ENCODE measurements at regions of chr6 and their contacts with region 1.

Region 1: DNA sequence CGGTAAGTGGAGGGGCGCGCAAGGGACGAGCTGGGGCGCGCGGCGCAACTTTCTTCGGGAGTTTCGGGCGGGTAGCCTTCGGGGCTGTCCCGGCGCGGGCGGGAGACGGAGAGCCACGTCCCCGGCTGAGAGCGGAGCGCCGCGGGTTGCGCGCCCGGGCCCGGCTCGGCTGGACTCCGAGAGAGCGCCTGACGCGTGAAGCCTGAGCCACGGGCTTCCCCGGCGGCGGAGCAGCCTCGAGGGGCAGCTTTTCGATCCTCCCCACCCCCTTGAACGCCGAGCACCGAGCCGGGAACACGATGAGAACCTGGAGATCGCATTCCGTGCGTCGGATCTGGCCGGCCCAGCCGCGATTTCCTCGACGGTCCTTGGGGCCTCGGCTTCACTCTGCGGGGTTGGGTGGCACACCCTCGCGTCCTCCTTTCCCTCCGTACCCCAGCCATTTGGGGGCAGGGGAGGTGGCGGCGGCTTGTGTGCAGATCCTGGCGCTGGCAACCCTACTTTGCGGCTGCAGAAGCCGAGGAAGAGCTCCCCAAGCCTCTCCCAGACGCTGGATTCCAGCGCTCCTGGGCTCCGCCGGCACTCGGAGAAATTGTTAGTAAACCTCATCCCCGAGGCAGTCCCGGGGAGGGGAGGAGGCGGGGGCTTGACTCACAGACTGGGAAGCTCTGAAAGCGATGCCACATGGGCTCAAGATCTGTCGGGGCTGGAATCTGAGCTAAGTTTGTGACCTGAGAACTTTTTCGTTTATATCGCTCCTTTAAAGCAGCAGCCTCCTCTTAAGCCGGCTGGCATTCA is 572 bp downstream of the DSE start:
- DNase-seq: peak; percentile 94
- H3K4me3 Mint-ChIP-seq: peak overlapping the region; percentile 85
- H3K27ac Mint-ChIP-seq: peak overlapping the region; percentile 88
- H3K4me1 Mint-ChIP-seq: peaks cover 32% of the 10 kb centered on the region
- H3K27me3 Mint-ChIP-seq: no peaks in the 10 kb centered on the region
- CTCF ChIP-seq: no peak

Region 2: DNA sequence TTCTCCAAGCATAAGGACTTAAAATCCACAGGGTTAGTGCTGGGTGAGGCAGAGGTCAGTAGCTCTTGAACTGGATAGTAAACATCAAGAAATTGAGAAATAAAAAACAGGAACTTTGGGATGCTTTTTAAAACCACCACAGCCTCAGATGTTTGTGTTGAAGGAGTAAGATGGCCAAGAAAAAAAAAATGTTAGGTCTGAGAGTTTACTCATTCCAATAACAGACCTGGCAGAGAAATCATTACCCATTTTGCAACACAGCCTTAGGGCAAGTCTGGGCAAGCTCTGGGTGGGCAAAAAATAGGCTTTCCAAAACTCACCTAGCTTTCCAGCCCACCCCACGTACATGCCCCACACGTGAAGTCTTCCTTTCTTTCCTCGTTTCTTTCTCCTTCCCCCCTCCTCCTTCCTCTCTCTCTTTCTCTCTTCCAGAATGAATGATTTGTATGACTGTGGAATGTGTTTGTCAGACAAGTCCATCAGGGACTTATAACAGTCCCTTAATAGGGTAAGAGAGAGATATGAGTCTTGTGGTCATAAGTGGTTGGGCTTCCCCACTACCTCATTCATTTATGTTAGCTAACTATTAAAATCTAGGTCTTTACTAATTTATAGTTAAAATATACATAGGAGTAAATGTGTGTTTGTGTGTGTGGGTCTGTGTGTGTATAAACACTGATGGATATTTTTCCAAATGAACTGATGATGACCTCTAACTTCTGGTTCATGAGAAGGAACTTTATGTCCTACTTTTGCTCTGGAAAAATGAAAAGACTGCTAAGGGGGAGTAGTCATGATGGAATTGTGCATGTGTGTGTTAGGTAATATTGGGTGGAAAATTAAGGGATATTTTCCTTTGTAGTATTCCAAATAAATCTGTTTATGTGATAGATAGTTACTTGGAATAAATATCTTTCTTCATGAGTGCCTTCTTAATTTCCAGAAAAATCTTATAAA is 18.5 kb before region 1 on chr6:
- CTCF ChIA-PET with region 1: interaction called, 4 read pairs
- POLR2A ChIA-PET with region 1: interaction called, 13 read pairs
- intact Hi-C with region 1: no loop called
- DNase-seq: peak; percentile 48
- H3K4me3 Mint-ChIP-seq: peak overlapping the region; percentile 11
- H3K27ac Mint-ChIP-seq: peak overlapping the region; percentile 90
- H3K4me1 Mint-ChIP-seq: peaks cover 15% of the 10 kb centered on the region
- H3K27me3 Mint-ChIP-seq: no peaks in the 10 kb centered on the region
- CTCF ChIP-seq: no peak

Region 3: DNA sequence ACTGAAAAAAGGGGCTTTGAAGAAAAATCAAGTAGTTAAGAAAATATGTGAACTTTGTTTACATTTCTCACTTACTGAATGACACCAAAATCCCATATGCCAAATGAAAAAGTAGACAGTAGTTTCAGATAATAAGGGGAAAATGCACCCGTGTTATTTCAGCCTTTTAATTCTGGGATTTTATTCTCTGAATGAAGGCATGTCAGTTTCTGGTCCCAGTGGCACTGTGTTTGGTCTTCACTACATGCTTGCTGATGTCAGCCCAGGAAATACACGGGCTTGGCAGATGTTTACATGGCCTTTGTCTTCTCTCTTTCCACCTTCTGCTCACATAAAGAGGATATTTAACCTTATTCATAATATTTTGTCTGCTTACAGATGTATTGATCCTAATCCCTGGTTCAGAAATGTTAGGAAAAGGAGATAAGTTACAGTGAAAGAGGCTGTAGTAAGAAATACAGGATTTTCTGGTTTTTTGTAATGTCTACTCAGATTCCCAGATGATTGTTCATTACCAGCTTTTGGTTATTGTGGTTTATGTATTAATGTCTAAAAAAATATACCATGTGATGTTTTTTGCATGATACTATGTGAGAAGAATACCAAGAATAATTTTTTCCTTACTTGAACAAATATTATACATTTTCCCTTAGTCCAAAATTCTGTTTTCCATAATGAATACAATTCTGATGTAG is 27.1 kb after region 1 on chr6:
- CTCF ChIA-PET with region 1: interaction called, 7 read pairs
- POLR2A ChIA-PET with region 1: interaction called, 36 read pairs
- intact Hi-C with region 1: loop called (anchors 1 kb)
- DNase-seq: peak; percentile 22
- H3K4me3 Mint-ChIP-seq: no peak overlapping the region
- H3K27ac Mint-ChIP-seq: peak overlapping the region; percentile 12
- H3K4me1 Mint-ChIP-seq: peaks cover 29% of the 10 kb centered on the region
- H3K27me3 Mint-ChIP-seq: no peaks in the 10 kb centered on the region
- CTCF ChIP-seq: no peak

Region 4: DNA sequence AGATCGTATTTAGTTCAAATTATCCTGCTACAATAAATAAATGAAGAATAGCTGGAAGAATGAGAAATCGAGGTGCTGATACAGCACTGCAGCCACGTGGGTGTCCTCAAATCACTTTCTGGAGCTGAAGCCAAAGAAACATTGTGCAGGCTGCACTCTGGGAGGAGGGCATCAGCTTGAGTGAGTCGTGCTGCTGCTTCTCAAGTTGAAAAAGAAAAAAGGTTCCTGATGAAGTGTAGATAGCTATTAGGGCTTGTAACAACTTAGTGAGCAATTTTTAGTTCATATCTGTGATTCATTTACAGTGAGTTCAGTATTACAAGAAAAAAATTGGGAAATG is 39.9 kb after region 1 on chr6:
- CTCF ChIA-PET with region 1: no interaction called
- POLR2A ChIA-PET with region 1: interaction called, 11 read pairs
- intact Hi-C with region 1: no loop called
- DNase-seq: peak; percentile 39
- H3K4me3 Mint-ChIP-seq: no peak overlapping the region
- H3K27ac Mint-ChIP-seq: no peak overlapping the region
- H3K4me1 Mint-ChIP-seq: peaks cover 42% of the 10 kb centered on the region
- H3K27me3 Mint-ChIP-seq: no peaks in the 10 kb centered on the region
- CTCF ChIP-seq: no peak

Region 5: DNA sequence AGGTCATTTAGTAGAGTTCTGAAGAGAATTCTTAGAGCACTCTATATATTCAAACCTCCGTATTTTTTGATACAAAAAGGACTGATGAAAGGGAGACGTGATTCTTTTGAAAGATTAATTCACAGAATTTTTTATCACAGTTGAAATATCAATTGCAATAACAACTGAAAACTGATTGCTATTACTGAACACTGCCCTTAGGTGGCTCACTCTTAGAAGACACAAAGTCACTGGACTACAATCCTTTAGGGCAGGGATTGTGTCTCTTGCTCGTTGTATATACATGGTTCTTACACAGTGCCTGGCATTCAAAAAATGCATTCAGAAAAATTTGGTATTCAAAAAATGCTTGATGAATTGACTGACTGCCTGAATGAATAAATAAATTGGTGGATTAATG is 72.8 kb after region 1 on chr6:
- CTCF ChIA-PET with region 1: interaction called, 4 read pairs
- POLR2A ChIA-PET with region 1: interaction called, 6 read pairs
- intact Hi-C with region 1: loop called (anchors 5 kb)
- DNase-seq: peak; percentile 53
- H3K4me3 Mint-ChIP-seq: no peak overlapping the region
- H3K27ac Mint-ChIP-seq: peak overlapping the region; percentile 37
- H3K4me1 Mint-ChIP-seq: peaks cover 24% of the 10 kb centered on the region
- H3K27me3 Mint-ChIP-seq: no peaks in the 10 kb centered on the region
- CTCF ChIP-seq: peak; percentile 54

Measured in MCF 10A (cell line).